Heart left ventricle (tissue), 16 donors: ENCODE measurements at regions of chr1 and their contacts with region 1.

Region 1: GRCh38 chr1:153698020-153698931 is 19.8 kb downstream of the NPR1 start:
- DNase-seq: peak; percentile 80 to 90 (median 81)
- ATAC-seq: peak; percentile 85 to 92 (median 89)
- H3K4me3 ChIP-seq: peak overlapping the region in 8 of 12 donors; percentile 5 to 37 (median 21)
- H3K27ac ChIP-seq: peak overlapping the region; percentile 83 to 98 (median 90)
- H3K4me1 ChIP-seq: peaks cover 11 to 37% (median 24%) of the 10 kb centered on the region in 12 donors
- H3K27me3 ChIP-seq: no peaks in the 10 kb centered on the region
- CTCF ChIP-seq: no peak
- POLR2A ChIP-seq: peak in 1 of 2 donors; percentile 6

Region 2: GRCh38 chr1:153658400-153659174 is 39.7 kb before region 1 on chr1 and contains the start of gene SNAPIN:
- intact Hi-C with region 1: no loop called
- DNase-seq: peak; percentile 93 to 95 (median 95)
- ATAC-seq: peak; percentile 94 to 98 (median 98)
- H3K4me3 ChIP-seq: peak within 1 kb of the TSS; percentile 48 to 96 (median 82)
- H3K27ac ChIP-seq: peak within 1 kb of the TSS; percentile 88 to 99 (median 96)
- H3K4me1 ChIP-seq: peaks cover 0 to 18% (median 12%) of the 10 kb centered on the region in 12 donors
- H3K27me3 ChIP-seq: no peaks in the 10 kb centered on the region
- CTCF ChIP-seq: peak in 7 of 12 donors; percentile 10 to 46 (median 29)
- POLR2A ChIP-seq: peak in 1 of 2 donors; percentile 70
- total RNA-seq, gene SNAPIN: 53.7 to 88.7 (median 70.8) TPM

Region 3: GRCh38 chr1:153717330-153717729 is 19.1 kb after region 1 on chr1:
- intact Hi-C with region 1: loop called in 1 of 10 experiments (anchors 2 kb)
- DNase-seq: no peak
- ATAC-seq: no peak
- H3K4me3 ChIP-seq: no peak overlapping the region
- H3K27ac ChIP-seq: no peak overlapping the region
- H3K4me1 ChIP-seq: no peaks in the 10 kb centered on the region
- H3K27me3 ChIP-seq: peaks cover 0 to 3% (median 0%) of the 10 kb centered on the region in 9 donors
- CTCF ChIP-seq: no peak
- POLR2A ChIP-seq: no peak

Region 4: DNA sequence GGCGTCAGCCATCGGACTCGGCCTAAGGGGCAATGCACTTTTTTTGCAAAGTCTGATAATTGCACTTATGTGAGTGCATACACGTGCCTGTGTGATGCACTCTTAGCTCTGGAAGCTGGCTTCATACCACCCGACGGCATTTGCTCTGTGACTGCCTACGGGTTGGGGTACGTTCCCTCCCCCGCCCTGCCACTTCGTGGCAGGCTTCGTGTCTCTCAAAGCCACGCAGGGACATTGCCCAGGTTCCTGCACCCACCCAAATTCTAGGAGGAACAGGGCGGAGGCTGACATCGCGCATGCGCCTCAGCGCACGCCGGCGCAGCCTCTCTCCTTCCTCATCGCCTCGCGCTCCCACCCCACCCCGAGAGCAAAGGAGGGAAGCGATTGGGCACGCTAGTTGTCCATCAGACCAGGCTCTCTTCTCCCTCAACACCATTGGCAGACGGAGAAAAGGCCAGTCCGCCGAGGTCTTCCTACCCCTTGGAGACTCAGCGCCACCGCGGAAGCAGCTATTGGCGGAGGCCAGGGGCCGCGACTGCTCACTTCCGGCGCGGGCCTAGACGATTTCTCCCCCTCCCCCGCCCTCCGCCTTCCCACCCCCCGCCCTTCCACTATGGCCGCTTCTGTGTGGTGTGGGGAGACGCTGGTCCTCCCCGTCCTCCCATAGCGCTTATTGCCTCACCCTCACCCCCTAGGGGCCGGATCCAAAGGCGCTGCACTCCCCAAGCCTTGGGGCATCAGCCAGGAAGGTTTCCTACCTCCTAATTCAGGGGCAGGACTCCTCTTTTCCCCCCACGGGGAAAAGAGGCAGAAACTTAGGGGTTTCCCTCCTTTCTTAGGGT is 29.4 kb after region 1 on chr1 and contains the start of gene INTS3:
- intact Hi-C with region 1: loop called in 1 of 10 experiments (anchors 2 kb)
- DNase-seq: peak; percentile 100
- ATAC-seq: peak; percentile 99 to 100 (median 100)
- H3K4me3 ChIP-seq: peak within 1 kb of the TSS; percentile 44 to 98 (median 82)
- H3K27ac ChIP-seq: peak within 1 kb of the TSS; percentile 86 to 100 (median 98)
- H3K4me1 ChIP-seq: peaks cover 0 to 38% (median 22%) of the 10 kb centered on the region in 12 donors
- H3K27me3 ChIP-seq: no peaks in the 10 kb centered on the region
- CTCF ChIP-seq: peak in 3 of 12 donors; percentile 13 to 25 (median 14)
- POLR2A ChIP-seq: no peak
- total RNA-seq, gene INTS3: 19.6 to 33.2 (median 30.7) TPM

Region 5: DNA sequence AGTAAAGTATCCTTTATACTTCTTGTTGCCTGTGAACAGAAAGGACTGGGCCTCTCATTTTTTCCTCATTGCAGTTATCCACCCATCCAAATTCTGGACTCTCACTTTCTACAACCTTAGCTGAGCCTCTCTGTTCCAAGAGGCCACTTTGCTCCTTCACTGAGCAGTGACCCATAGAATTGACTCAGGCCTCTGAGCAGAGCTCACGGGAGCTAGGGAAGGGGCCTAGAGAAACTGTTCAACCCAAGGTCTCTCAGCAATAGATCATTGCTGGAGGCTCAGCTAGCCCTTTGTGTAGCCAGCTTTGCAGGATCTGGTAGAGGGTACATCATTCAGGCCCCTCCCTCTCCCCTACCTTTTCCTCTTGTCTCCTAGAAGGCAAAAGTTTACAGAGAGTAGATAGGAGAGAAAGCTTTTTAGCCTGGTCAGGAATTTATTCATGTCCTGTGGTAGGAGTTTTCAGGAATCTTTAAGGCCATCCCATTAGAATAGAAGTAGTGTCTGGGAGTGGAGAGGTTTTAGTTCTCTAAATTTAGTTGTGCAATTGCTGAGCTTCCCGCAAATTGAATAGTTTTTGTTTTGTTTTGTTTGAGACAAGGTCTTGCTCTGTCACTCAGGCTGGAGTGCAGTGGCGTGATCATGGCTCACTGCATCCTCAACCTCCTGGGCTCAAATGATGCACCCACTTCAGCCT is 36.3 kb after region 1 on chr1:
- intact Hi-C with region 1: loop called in 1 of 10 experiments (anchors 5 kb)
- DNase-seq: no peak
- ATAC-seq: peak in 2 of 4 donors; percentile 12 to 26
- H3K4me3 ChIP-seq: no peak overlapping the region
- H3K27ac ChIP-seq: peak overlapping the region in 4 of 12 donors; percentile 11 to 75 (median 30)
- H3K4me1 ChIP-seq: peaks cover 0 to 40% (median 19%) of the 10 kb centered on the region in 12 donors
- H3K27me3 ChIP-seq: no peaks in the 10 kb centered on the region
- CTCF ChIP-seq: no peak
- POLR2A ChIP-seq: no peak